Activated CD4-positive, alpha-beta T cell treated with anti-CD3 and anti-CD28 coated beads, Interleukin-2, amount 10 ng/mL, durations not matched to agents 24 days and 14 days (primary cell): ENCODE measurements at regions of chr1 and their contacts with region 1.

Region 1: DNA sequence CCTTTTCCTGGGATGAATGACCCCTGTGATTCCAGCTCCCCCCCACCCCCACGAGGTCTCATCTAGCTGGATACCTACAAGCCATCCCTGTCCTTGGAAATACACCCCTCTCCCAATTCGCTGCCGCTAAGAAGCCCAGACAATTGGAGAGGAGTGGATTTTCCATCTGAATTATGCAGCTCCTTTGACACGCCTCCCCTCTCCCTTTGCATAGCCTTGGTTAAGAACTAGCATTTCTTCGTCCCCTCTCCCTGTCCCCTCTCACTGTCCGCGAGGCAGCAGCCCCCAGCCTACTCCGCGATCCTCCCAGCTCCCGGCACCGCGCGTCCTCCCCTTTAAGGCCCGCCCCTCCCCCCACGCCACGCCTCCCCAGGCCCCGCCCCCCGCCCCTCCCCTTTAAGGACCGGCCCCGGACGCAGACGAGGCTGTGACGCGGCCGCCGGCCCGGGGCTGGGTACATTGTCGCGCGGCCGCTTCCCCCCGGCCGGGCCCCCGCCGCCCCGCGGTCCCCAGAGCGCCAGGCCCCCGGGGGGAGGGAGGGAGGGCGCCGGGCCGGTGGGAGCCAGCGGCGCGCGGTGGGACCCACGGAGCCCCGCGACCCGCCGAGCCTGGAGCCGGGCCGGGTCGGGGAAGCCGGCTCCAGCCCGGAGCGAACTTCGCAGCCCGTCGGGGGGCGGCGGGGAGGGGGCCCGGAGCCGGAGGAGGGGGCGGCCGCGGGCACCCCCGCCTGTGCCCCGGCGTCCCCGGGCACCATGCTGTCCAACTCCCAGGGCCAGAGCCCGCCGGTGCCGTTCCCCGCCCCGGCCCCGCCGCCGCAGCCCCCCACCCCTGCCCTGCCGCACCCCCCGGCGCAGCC is at the start of gene MAPKAPK2:
- DNase-seq: peak; percentile 91
- H3K4me3 Mint-ChIP-seq: peak within 1 kb of the TSS; percentile 99
- H3K27ac Mint-ChIP-seq: peak within 1 kb of the TSS; percentile 95
- H3K4me1 Mint-ChIP-seq: peaks cover 53% of the 10 kb centered on the region
- H3K27me3 Mint-ChIP-seq: peaks cover 7% of the 10 kb centered on the region
- total RNA-seq, gene MAPKAPK2: 95.1 and 97.4 TPM in 2 replicates

Region 2: DNA sequence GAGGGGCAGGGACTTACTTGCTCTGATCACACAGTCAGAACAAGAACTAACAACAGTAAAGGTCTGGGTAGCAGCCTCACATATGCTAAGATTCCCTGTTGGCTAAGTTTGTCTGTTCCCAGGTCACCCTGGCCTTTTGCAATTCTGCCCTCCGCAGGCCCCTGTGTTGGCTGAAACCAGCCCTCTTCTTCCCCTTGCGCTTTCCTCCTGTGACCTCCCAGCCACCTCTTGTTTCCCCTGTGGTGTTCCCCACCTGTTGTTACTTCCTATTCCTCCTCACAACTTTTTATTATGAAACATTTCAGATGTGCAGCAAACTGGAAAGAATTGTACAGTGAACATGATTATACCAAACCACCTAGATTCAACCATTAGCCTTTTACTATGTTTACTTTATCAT is 23.4 kb after region 1 on chr1:
- intact Hi-C with region 1: loop called (anchors 1 kb)
- DNase-seq: no peak
- H3K4me3 Mint-ChIP-seq: peak overlapping the region; percentile 47
- H3K27ac Mint-ChIP-seq: peak overlapping the region; percentile 75
- H3K4me1 Mint-ChIP-seq: peaks cover 81% of the 10 kb centered on the region
- H3K27me3 Mint-ChIP-seq: no peaks in the 10 kb centered on the region

Region 3: GRCh38 chr1:206716870-206717673 is 32.4 kb after region 1 on chr1:
- intact Hi-C with region 1: loop called (anchors 5 kb)
- DNase-seq: peak; percentile 80
- H3K4me3 Mint-ChIP-seq: peak overlapping the region; percentile 27
- H3K27ac Mint-ChIP-seq: peak overlapping the region; percentile 77
- H3K4me1 Mint-ChIP-seq: peaks cover 64% of the 10 kb centered on the region
- H3K27me3 Mint-ChIP-seq: no peaks in the 10 kb centered on the region